ENCODE measurements at regions of chr7 and their contacts with region 1.

Region 1: DNA sequence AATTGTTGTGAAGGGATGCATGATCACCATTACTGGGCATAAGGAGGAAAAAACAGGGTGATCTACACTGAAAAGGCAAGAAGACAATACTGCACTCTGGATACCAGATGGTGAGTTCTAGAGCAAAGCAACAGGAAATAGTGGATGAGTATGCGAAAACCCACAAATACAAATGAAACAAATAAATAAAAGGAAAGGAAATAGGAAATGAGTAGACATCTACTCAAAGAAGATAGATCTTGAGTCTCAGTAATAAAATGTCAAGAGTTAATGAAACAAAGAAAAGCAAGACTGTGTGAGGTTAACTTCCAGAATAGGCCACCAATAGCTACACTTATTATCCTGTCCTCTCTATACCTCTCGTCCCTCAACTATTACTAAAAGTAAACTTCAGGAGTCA is 11.7 kb downstream of the ORC5 start:
- DNase-seq: no peak
- H3K27ac ChIP-seq: no peak overlapping the region
- CTCF ChIP-seq: no peak

Region 2: GRCh38 chr7:103833401-103833800 is 362.8 kb before region 1 on chr7:
- CTCF ChIA-PET with region 1: no interaction called
- POLR2A ChIA-PET with region 1: no interaction called
- DNase-seq: no peak
- H3K27ac ChIP-seq: no peak overlapping the region
- CTCF ChIP-seq: no peak

Region 3: GRCh38 chr7:104149822-104150221 is 46.3 kb before region 1 on chr7:
- CTCF ChIA-PET with region 1: no interaction called
- POLR2A ChIA-PET with region 1: no interaction called
- DNase-seq: no peak
- H3K27ac ChIP-seq: no peak overlapping the region
- CTCF ChIP-seq: no peak

Region 4: DNA sequence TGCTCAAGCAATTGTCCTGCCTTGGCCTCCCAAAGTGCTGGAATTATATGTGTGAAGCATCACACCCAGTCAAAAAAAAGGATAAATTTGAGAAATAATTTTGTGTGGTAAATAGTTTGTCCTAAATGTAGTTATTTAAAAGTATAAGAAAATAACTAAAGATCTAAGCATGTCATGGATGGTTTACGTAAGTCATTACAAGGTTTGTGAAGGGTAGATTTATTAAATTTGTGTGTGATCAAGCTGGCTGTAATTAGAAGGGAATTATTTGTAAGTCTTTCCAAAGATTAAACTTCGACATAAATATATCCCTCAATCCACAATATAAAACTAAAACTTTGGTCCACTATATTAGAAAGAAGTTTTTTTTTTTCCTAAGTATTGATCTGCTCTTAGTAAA is 17.0 kb before region 1 on chr7:
- CTCF ChIA-PET with region 1: interaction called, 4 read pairs
- POLR2A ChIA-PET with region 1: interaction called, 10 read pairs
- DNase-seq: no peak
- H3K27ac ChIP-seq: no peak overlapping the region
- CTCF ChIP-seq: no peak

Region 5: DNA sequence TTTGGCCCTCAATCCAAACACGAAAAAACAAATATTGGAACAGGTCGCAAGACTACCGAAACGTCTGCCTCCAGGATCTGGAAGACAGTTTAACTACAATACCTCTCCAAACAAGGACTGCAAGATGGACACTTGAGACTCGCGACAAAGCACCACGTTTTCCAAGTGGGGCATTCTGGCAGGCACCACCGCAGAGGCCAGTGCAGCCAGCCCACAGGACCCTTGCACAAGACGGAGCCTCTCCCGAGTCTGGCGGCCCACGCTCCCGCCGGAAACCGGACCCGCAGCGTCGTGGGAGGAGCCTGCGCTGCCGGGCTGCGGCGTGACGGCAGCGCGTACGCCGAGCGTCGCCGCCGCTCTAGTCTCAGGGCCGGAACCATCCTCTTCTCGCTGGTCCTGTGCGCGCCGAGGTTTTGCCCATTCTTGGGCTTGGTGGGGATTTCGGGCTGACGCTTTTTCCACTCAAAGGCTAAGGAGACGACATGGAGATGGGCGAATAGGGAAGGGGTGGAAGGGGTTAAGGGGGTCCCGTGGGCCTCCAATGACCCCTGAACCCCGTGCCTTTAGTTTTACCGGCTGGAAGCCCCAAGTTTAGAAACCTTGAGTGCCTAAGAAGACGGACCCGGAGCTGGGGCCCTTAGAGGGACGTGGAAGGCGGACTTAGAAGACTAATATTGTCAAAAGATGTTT is 11.7 kb after region 1 on chr7 and contains the start of gene ORC5:
- CTCF ChIA-PET with region 1: no interaction called
- POLR2A ChIA-PET with region 1: no interaction called
- DNase-seq: peak; percentile 88
- H3K27ac ChIP-seq: peak within 1 kb of the TSS; percentile 63
- CTCF ChIP-seq: no peak

Region 6: GRCh38 chr7:104883718-104884452 is 687.7 kb after region 1 on chr7:
- CTCF ChIA-PET with region 1: no interaction called
- POLR2A ChIA-PET with region 1: no interaction called
- DNase-seq: peak; percentile 80
- H3K27ac ChIP-seq: no peak overlapping the region
- CTCF ChIP-seq: peak; percentile 91

Measured in RWPE1 (cell line).